Aorta (tissue), 5 donors: ENCODE measurements at regions of chr7 and their contacts with region 1.

Region 1: DNA sequence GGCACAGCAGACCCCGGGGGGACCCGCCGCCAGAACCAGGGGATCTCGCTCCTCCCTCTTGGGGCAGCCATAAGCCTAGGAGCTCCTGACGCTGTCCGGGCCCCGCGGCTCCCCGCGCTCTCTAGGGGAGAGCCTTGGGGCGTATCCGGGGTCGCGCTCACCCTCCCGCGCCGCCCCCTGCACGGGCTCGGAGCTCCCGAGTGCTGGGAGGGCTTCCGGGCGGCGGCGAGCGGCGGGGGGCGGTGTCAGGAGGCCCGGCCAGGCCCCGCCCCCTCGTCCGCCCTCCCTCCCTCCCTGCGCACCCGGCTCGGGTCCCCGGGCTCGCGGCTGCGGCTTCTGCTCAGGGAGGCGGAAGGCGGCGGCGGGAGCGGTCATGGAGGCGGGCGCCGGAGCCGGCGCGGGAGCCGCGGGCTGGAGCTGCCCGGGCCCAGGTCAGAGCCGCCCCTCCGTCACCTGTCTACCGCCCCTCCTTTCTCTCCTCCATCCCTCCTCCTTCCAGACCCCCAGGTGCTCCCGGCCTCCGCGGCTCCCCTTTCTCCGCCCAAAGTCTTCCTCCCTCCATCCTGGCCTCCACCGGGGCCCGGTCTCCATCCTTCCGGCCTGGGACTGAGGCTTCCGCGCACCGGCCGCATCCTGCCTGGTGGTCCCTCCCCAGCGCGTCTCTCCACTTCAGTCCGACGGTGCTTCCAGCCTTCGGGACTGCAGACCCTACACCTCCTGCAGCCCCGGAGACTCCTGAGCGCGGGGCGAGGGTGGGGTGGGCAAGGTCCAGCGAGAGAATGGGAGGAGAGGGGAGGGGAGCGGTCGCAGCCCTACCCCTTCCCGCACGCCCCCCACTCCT is 427 bp upstream of the CCDC136 start:
- DNase-seq: peak; percentile 84 to 93
- ATAC-seq: peak; percentile 86
- H3K4me3 ChIP-seq: peak overlapping the region; percentile 63 to 79
- H3K27ac ChIP-seq: no peak overlapping the region
- H3K4me1 ChIP-seq: no peaks in the 10 kb centered on the region
- H3K27me3 ChIP-seq: no peaks in the 10 kb centered on the region

Region 2: GRCh38 chr7:128687131-128687530 is 104.2 kb before region 1 on chr7:
- intact Hi-C with region 1: no loop called
- DNase-seq: no peak
- ATAC-seq: no peak
- H3K4me3 ChIP-seq: no peak overlapping the region
- H3K27ac ChIP-seq: no peak overlapping the region
- H3K4me1 ChIP-seq: no peaks in the 10 kb centered on the region
- H3K27me3 ChIP-seq: peaks cover 0 to 2% of the 10 kb centered on the region in 2 donors

Region 3: DNA sequence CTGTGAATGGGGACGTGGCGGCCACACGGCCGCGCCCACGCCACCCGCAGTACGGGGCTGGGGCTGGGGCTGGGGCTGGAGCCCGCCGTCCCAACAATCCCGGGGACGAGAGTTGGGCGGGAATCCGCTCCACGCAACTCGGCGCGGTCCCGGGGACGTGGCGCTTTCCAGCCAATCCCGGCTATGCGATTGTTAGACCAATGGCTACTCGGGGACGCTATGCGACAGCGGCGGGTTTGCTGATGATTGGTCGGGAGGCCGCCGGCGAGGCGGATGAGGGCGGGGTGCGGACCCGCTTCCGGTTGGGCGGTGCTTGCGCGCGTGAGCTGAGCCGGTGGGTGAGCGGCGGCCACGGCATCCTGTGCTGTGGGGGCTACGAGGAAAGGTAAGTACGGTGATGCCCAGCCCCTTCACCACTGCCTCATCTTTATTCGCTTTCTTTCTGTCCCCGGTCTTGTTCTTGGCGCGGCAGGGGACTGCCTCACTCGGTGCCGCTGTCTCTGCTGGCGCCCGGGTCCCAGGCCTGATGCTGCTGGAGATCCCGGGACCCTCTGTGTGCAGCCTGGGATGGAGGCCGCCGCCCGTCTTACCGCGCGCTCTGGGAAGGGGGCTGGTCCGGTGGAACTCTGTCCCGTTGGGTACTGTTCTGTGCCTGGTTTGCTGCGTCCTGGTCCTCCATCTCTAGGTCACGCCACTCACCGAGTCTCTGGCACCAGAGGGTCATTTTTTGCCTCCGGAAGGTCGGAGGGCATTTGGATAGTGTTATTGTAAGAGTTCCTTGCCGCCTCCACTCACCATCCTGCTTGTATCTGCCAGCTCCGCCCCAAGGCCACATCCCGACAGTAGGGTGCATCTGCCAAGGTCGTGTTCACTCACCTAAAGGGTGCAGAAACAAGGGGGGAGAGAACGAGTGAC is 52.0 kb before region 1 on chr7 and contains the start of gene CALU:
- intact Hi-C with region 1: loop called in 1 of 2 experiments (anchors 5 kb)
- DNase-seq: peak; percentile 99
- ATAC-seq: peak; percentile 99
- H3K4me3 ChIP-seq: peak within 1 kb of the TSS; percentile 70 to 94
- H3K27ac ChIP-seq: peak within 1 kb of the TSS; percentile 59 to 91
- H3K4me1 ChIP-seq: peaks cover 0 to 3% of the 10 kb centered on the region in 2 donors
- H3K27me3 ChIP-seq: no peaks in the 10 kb centered on the region
- total RNA-seq, gene CALU: 206 to 267 TPM

Region 4: GRCh38 chr7:128830231-128831177 is 39.2 kb after region 1 on chr7 and contains the start of gene FLNC:
- intact Hi-C with region 1: loop called (anchors 2 to 5 kb)
- DNase-seq: peak; percentile 76 to 91
- ATAC-seq: peak; percentile 8
- H3K4me3 ChIP-seq: peak within 1 kb of the TSS; percentile 40 to 68
- H3K27ac ChIP-seq: peak within 1 kb of the TSS; percentile 7 to 81
- H3K4me1 ChIP-seq: no peaks in the 10 kb centered on the region
- H3K27me3 ChIP-seq: no peaks in the 10 kb centered on the region
- total RNA-seq, gene FLNC: 135 to 245 TPM

Region 5: GRCh38 chr7:128862571-128863432 is 71.5 kb after region 1 on chr7 and contains the start of gene ATP6V1F:
- intact Hi-C with region 1: loop called in 1 of 2 experiments (anchors 2 kb)
- DNase-seq: peak; percentile 98 to 100
- ATAC-seq: peak; percentile 95
- H3K4me3 ChIP-seq: peak within 1 kb of the TSS; percentile 27 to 71
- H3K27ac ChIP-seq: no peak within 1 kb of the TSS
- H3K4me1 ChIP-seq: no peaks in the 10 kb centered on the region
- H3K27me3 ChIP-seq: no peaks in the 10 kb centered on the region
- total RNA-seq, gene ATP6V1F: 83.7 to 84.8 TPM

Region 6: DNA sequence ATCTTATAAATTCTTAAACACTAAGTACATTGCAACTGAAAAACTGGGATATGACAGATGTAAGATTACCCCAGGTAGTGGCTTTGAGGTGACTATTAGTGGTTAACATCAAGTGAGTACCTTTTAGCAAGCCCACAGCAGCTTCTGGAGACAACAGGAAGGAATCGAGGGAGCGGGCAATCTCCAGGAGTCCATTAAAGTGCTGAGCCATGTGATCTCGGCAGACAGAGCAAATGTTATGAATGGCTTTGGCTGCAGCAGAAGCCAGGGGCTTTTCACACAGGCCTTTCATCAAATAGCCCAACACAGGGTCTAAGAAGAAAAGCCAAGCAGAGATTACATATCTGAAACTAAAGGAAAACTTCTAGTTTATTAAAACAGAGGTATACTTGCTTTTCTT is 195.3 kb after region 1 on chr7:
- intact Hi-C with region 1: no loop called
- DNase-seq: no peak
- ATAC-seq: no peak
- H3K4me3 ChIP-seq: no peak overlapping the region
- H3K27ac ChIP-seq: no peak overlapping the region
- H3K4me1 ChIP-seq: no peaks in the 10 kb centered on the region
- H3K27me3 ChIP-seq: no peaks in the 10 kb centered on the region

Region 7: DNA sequence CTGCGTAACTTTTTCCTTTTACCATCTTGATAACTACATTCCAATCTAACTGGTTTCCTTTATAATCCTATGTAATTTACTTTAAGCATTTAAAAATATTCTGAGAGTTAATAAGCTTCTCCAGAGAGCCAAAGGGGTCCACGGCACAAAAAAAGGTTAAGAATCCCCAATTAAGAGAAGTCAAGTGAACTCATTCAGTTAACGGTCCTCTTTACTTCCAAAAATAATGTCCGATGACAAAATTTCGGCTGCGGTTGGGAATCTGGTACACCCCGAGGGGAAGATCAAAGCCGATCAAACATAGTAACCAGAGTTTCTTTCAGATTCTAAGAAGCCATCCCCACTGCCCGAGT is 1259.4 kb after region 1 on chr7:
- intact Hi-C with region 1: no loop called
- DNase-seq: no peak
- ATAC-seq: no peak
- H3K4me3 ChIP-seq: peak overlapping the region; percentile 52 to 84
- H3K27ac ChIP-seq: no peak overlapping the region
- H3K4me1 ChIP-seq: no peaks in the 10 kb centered on the region
- H3K27me3 ChIP-seq: no peaks in the 10 kb centered on the region